Endothelial cell of umbilical vein (primary cell): ENCODE measurements at regions of chr9 and their contacts with region 1.

Region 1: GRCh38 chr9:98010445-98010844 is 27.3 kb downstream of the ANP32B start:
- DNase-seq: peak; percentile 82
- H3K4me3 ChIP-seq: no peak overlapping the region
- H3K27ac ChIP-seq: peak overlapping the region; percentile 71
- H3K4me1 ChIP-seq: peaks cover 42% of the 10 kb centered on the region
- H3K27me3 ChIP-seq: no peaks in the 10 kb centered on the region
- CTCF ChIP-seq: no peak
- POLR2A ChIP-seq: peak; percentile 16

Region 2: DNA sequence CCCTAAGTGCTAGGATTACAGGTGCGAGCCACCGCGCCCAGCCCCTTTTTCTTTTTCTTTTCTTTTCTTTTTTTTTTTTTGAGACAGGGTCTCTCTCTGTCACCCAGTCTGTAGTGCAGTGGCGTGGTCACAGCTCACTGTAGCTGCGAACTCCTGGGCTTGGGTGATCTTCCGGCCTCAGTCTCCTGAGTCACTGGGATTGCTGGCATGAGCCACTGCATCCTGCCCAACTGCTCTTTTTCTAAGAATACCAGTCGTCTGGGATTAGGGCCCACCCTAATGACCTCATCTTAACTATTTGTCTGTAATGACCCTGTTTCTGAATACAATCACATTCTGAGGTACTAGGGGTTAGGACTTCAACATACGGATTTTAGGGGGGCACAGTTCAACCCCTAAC is 12.0 kb after region 1 on chr9:
- CTCF ChIA-PET with region 1: interaction called, 5 read pairs
- POLR2A ChIA-PET with region 1: no interaction called
- dilution Hi-C with region 1: no loop called
- intact Hi-C with region 1: loop called (anchors 1 kb)
- DNase-seq: peak; percentile 64
- H3K4me3 ChIP-seq: no peak overlapping the region
- H3K27ac ChIP-seq: peak overlapping the region; percentile 73
- H3K4me1 ChIP-seq: peaks cover 18% of the 10 kb centered on the region
- H3K27me3 ChIP-seq: no peaks in the 10 kb centered on the region
- CTCF ChIP-seq: no peak
- POLR2A ChIP-seq: no peak

Region 3: GRCh38 chr9:98056269-98057137 is 46.1 kb after region 1 on chr9 and contains the start of gene NANS:
- CTCF ChIA-PET with region 1: interaction called, 3 read pairs
- POLR2A ChIA-PET with region 1: interaction called, 6 read pairs
- dilution Hi-C with region 1: no loop called
- intact Hi-C with region 1: loop called (anchors 1 kb)
- DNase-seq: peak; percentile 99
- H3K4me3 ChIP-seq: peak within 1 kb of the TSS; percentile 60 to 91 (median 69)
- H3K27ac ChIP-seq: peak within 1 kb of the TSS; percentile 80
- H3K4me1 ChIP-seq: peaks cover 15% of the 10 kb centered on the region
- H3K27me3 ChIP-seq: no peaks in the 10 kb centered on the region
- CTCF ChIP-seq: peak in 1 of 2 donors; percentile 8
- POLR2A ChIP-seq: peak; percentile 93
- total RNA-seq, gene NANS: 72.5 and 85.1 TPM in 2 replicates

Region 4: GRCh38 chr9:98215821-98216220 is 205.4 kb after region 1 on chr9:
- CTCF ChIA-PET with region 1: no interaction called
- POLR2A ChIA-PET with region 1: no interaction called
- dilution Hi-C with region 1: no loop called
- intact Hi-C with region 1: no loop called
- DNase-seq: peak; percentile 12
- H3K4me3 ChIP-seq: no peak overlapping the region
- H3K27ac ChIP-seq: no peak overlapping the region
- H3K4me1 ChIP-seq: no peaks in the 10 kb centered on the region
- H3K27me3 ChIP-seq: no peaks in the 10 kb centered on the region
- CTCF ChIP-seq: peak; percentile 44 to 50
- POLR2A ChIP-seq: no peak